ENCODE measurements at regions of chr6 and their contacts with region 1.

Region 1: GRCh38 chr6:106135967-106136571 is 49.9 kb downstream of the PRDM1 start:
- DNase-seq: no peak
- H3K4me3 ChIP-seq: no peak overlapping the region
- H3K27ac ChIP-seq: no peak overlapping the region
- H3K4me1 ChIP-seq: peaks cover 0 to 12% (median 3%) of the 10 kb centered on the region in 4 donors
- H3K27me3 ChIP-seq: no peaks in the 10 kb centered on the region
- CTCF ChIP-seq: no peak
- EP300 ChIP-seq: no peak
- POLR2A ChIP-seq: no peak

Region 2: DNA sequence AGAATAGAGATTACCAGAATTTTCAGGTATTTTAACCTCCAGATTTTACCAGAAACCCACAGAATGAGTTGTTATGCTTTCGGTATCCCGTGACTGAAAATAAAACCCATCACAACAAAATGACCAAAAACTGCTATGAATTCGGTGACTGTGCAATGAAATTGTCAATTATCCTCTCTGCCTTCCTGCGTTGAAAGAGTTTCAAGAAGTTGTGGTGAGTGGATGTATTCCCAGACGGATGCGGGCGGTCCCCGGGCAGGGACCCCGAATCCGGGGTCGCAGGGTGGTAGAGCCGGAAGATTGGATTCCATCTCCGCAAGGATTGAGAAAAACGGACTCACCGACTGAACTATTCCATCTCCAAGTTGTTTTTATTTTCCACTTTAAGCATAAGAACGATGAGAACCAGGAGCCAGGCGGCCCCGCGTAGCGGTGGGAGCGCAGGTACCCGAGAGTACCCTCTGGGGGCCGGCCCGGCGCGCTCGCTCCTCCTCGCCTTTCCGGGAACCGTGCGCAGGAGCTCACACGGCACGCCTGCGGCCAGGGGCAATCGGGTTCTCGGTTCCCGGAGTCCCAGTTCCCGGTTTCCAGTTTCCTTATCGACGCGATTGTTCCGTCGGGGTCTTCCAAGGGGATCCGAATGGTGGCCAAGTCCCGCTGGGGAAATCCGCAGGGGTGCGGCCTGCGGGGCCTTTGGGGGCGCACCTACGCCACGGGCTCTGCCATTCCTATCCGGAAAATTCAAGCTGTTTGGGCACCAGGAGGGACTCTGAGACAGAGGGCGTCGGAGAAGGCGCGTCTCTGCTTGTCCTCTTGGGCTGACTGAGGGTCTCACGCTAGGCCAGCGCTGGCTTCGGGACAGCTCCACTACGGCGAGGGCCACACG is 154.8 kb before region 1 on chr6:
- in situ Hi-C with region 1: no loop called
- intact Hi-C with region 1: no loop called
- DNase-seq: peak; percentile 55
- H3K4me3 ChIP-seq: peak overlapping the region in 3 of 4 donors; percentile 6 to 36 (median 15)
- H3K27ac ChIP-seq: peak overlapping the region in 1 of 4 donors; percentile 34
- H3K4me1 ChIP-seq: peaks cover 6 to 34% (median 14%) of the 10 kb centered on the region in 4 donors
- H3K27me3 ChIP-seq: peaks cover 50% of the 10 kb centered on the region
- CTCF ChIP-seq: no peak
- EP300 ChIP-seq: no peak
- POLR2A ChIP-seq: no peak

Region 3: GRCh38 chr6:106014930-106015329 is 121.1 kb before region 1 on chr6:
- in situ Hi-C with region 1: no loop called
- intact Hi-C with region 1: no loop called
- DNase-seq: no peak
- H3K4me3 ChIP-seq: no peak overlapping the region
- H3K27ac ChIP-seq: no peak overlapping the region
- H3K4me1 ChIP-seq: no peaks in the 10 kb centered on the region
- H3K27me3 ChIP-seq: peaks cover 10% of the 10 kb centered on the region
- CTCF ChIP-seq: no peak
- EP300 ChIP-seq: no peak
- POLR2A ChIP-seq: no peak

Region 4: GRCh38 chr6:106059331-106059730 is 76.7 kb before region 1 on chr6:
- in situ Hi-C with region 1: no loop called
- intact Hi-C with region 1: loop called (anchors 2 kb)
- DNase-seq: no peak
- H3K4me3 ChIP-seq: no peak overlapping the region
- H3K27ac ChIP-seq: no peak overlapping the region
- H3K4me1 ChIP-seq: peaks cover 0 to 12% (median 4%) of the 10 kb centered on the region in 4 donors
- H3K27me3 ChIP-seq: no peaks in the 10 kb centered on the region
- CTCF ChIP-seq: no peak
- EP300 ChIP-seq: no peak
- POLR2A ChIP-seq: no peak

Region 5: DNA sequence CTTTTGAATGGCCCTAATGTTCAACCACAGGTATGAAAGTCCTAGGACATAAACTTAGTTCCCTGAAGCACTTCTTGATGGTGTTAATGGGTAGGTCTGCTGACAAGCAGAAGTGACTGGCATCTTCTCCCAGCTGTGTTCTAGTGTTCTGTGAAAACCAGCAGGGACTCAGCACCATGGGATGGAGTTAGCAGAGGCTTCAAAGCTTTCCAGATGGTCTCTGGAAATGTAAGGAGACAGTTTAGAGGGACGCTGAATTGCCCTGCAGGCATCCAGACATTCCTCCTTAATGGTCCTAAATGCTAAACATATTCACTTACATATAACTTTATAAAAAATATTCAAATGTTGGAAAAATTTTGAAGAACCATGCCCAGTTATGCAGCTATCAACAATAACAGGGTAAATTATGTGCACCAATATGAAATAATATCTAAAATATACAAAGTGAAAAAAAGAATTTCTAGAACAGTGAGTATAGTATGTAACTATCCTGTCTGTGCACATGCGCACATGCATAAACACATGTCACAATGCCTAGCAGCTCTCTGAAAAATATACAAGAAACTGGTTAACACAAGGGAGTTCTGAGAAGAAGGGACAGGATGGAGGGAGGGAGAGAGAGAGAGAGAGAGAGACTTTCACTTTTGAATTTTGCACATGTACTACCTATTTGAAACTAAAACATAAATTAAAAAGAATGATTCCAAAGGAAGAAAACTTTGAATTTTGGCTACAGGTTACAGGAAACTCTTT is 37.2 kb after region 1 on chr6:
- in situ Hi-C with region 1: no loop called
- intact Hi-C with region 1: no loop called
- DNase-seq: no peak
- H3K4me3 ChIP-seq: no peak overlapping the region
- H3K27ac ChIP-seq: no peak overlapping the region
- H3K4me1 ChIP-seq: peaks cover 0 to 16% (median 4%) of the 10 kb centered on the region in 4 donors
- H3K27me3 ChIP-seq: no peaks in the 10 kb centered on the region
- CTCF ChIP-seq: no peak
- EP300 ChIP-seq: no peak
- POLR2A ChIP-seq: no peak

Measured in transverse colon (tissue), 4 donors.